CD4-positive, alpha-beta memory T cell (primary cell): ENCODE measurements at regions of chr17 and their contacts with region 1.

Region 1: DNA sequence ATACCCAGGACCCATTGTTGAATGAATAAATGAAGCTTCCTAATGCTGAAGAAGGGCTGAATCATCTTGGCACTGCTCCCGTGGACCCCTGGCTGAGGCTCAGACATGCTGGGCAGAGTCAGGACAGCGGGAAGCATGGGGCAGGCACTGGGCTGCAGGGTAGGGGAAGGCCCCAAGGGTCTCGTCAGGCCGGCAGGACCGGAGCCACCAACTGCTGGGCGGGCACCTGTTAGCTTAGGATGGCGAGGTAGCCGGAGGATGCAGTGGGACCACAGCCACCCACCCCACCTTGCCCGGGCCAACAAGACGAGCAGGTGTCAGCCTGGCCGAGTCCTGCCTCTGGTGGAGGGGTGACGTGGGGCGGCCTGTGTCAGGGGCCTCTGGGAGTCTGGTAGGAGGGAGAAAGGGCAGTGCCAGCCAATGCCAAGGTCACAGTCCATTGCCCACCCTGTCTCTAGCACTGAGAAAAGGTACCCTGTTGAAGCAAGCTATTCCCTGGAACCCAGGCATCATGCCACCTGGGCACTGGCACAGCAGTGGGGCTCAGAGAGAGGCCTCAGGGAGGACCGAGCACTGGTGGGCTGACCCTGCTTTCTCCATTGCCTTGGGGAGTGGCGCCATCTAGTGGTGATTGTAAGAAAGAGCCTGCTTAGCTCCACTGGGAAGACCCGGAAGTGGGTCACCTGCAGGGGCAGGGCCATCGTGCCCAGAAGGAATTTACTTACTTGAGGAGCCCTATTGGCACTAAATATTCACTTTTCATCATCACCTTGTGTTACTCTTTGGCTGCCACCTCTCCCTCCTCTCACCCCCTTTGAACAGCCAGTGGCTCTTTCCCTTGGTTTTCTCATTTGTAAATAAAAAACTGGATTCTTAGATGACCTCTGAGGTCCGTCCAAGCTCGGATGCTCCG is 3.0 kb upstream of the DLX3 start:
- DNase-seq: peak; percentile 80 to 83 (median 82)
- H3K4me3 ChIP-seq: no peak overlapping the region
- H3K4me3 Mint-ChIP-seq: peak overlapping the region in 1 of 8 donors; percentile 43
- H3K27ac ChIP-seq: no peak overlapping the region
- H3K27ac Mint-ChIP-seq: peak overlapping the region in 1 of 7 donors; percentile 55
- H3K4me1 ChIP-seq: peaks cover 35% of the 10 kb centered on the region
- H3K4me1 Mint-ChIP-seq: peaks cover 19 to 43% (median 25%) of the 10 kb centered on the region in 4 donors
- H3K27me3 ChIP-seq: peaks cover 61% of the 10 kb centered on the region
- H3K27me3 Mint-ChIP-seq: peaks cover 62 to 64% of the 10 kb centered on the region in 2 donors

Region 2: DNA sequence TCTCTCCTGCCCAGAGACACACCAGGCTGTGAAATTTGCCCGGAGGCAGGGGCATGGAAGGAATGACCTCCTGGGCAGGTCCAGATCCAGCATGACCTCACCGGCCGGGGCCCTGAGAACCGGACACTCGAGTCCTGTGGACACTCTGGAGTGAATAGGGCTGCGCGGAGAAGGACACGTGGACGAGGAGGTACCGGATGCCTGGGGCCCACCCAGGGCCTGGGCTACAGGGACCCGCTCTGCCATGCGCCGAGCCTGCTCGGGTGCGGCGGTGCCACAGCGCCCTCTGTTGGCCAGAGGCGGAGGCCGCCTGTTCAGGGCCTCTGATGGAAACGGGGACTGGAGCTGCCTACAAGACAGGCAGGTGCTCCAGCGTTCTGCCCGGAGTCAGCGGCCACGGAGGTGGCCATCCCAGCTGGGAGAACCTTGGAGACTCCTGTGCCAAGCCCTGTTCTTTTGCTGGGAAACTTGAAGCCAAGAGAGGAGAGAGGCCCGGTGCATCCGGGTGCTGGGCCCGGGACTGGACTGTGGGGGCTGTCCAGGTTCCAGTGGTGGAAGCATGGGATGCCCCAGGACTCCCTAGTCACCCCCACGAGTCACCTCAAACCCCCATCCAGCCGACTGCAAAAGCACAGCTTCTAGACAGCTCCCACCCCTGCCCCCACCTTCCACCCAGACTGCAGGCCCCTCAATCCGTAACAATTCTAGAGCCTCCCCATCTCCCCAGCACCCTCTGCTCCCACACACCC is 441.6 kb before region 1 on chr17:
- CTCF ChIA-PET with region 1: interaction called, 20 read pairs
- POLR2A ChIA-PET with region 1: no interaction called
- intact Hi-C with region 1: no loop called
- DNase-seq: peak; percentile 69 to 80 (median 74)
- H3K4me3 ChIP-seq: no peak overlapping the region
- H3K4me3 Mint-ChIP-seq: peak overlapping the region in 1 of 8 donors; percentile 55
- H3K27ac ChIP-seq: no peak overlapping the region
- H3K27ac Mint-ChIP-seq: no peak overlapping the region
- H3K4me1 ChIP-seq: peaks cover 6% of the 10 kb centered on the region
- H3K4me1 Mint-ChIP-seq: peaks cover 5 to 7% (median 5%) of the 10 kb centered on the region in 4 donors
- H3K27me3 ChIP-seq: no peaks in the 10 kb centered on the region
- H3K27me3 Mint-ChIP-seq: peaks cover 1 to 3% of the 10 kb centered on the region in 2 donors

Region 3: DNA sequence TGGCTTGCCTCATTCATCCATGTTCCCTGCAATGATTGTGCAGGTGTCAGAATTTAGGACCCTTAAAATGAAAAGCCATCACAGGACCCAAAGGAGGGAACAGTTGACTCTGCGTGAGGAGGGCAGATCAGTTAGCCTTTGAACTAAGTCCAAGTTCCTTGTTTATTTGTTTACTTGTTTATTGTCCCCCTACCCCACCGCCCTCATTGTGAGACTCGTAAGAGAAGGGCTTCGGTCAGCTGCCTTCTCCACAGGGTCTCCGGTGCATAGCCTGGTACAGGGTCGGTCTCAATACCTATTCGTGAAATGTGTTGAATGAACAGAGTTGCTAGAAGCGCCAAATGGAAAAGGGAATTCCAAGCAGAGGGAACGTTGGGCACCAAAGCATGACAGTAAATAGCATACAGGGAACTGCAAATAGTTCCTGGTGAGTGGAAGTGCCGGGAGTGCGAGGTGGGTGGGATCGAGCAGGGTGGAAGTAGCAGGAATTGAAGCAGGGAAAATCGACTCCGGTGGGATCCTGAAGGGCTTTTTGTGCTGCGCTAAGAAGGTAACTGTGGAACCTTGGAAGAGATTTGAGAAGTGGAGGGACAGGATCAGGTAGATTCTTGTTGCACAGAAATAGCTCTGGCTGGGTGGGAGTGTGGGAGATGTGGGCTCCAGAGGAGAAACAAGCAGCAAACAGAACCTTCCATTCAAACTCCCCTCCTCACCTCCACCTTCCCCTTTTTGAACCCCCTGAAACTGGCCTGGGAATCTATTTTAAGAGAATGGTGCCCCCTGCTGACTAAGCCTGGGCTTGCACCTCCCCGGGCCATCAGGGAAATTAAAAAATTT is 303.0 kb before region 1 on chr17:
- CTCF ChIA-PET with region 1: no interaction called
- POLR2A ChIA-PET with region 1: no interaction called
- intact Hi-C with region 1: loop called (anchors 5 kb)
- DNase-seq: peak; percentile 52 to 70 (median 61)
- H3K4me3 ChIP-seq: no peak overlapping the region
- H3K4me3 Mint-ChIP-seq: peak overlapping the region in 3 of 8 donors; percentile 1 to 41 (median 4)
- H3K27ac ChIP-seq: no peak overlapping the region
- H3K27ac Mint-ChIP-seq: peak overlapping the region; percentile 65 to 90 (median 83)
- H3K4me1 ChIP-seq: peaks cover 19% of the 10 kb centered on the region
- H3K4me1 Mint-ChIP-seq: peaks cover 22 to 51% (median 30%) of the 10 kb centered on the region in 4 donors
- H3K27me3 ChIP-seq: no peaks in the 10 kb centered on the region
- H3K27me3 Mint-ChIP-seq: no peaks in the 10 kb centered on the region

Region 4: GRCh38 chr17:49880291-49881053 is 117.6 kb before region 1 on chr17:
- CTCF ChIA-PET with region 1: interaction called, 95 read pairs
- POLR2A ChIA-PET with region 1: interaction called, 11 read pairs
- intact Hi-C with region 1: loop called (anchors 1 kb)
- DNase-seq: peak; percentile 56 to 70 (median 64)
- H3K4me3 ChIP-seq: no peak overlapping the region
- H3K4me3 Mint-ChIP-seq: peak overlapping the region in 4 of 8 donors; percentile 22 to 52 (median 42)
- H3K27ac ChIP-seq: no peak overlapping the region
- H3K27ac Mint-ChIP-seq: no peak overlapping the region
- H3K4me1 ChIP-seq: peaks cover 10% of the 10 kb centered on the region
- H3K4me1 Mint-ChIP-seq: peaks cover 0 to 7% (median 1%) of the 10 kb centered on the region in 4 donors
- H3K27me3 ChIP-seq: peaks cover 18% of the 10 kb centered on the region
- H3K27me3 Mint-ChIP-seq: peaks cover 25 to 40% of the 10 kb centered on the region in 2 donors

Region 5: DNA sequence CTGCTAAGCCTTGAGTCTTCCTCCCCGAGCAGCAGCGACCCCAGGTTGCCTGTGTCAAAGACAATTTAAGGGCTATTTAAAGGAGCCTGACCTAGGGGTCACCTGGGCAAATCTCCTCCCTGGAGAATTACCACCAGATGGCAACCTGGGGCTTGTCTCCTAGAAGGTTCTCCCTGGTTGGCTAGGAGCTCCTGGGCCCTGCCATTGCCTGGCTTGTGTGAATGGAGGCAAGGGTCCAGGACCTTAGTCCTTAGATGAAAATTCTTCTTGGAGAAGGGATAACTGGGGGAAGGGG is 98.9 kb before region 1 on chr17:
- CTCF ChIA-PET with region 1: interaction called, 21 read pairs
- POLR2A ChIA-PET with region 1: interaction called, 3 read pairs
- intact Hi-C with region 1: no loop called
- DNase-seq: no peak
- H3K4me3 ChIP-seq: no peak overlapping the region
- H3K4me3 Mint-ChIP-seq: no peak overlapping the region
- H3K27ac ChIP-seq: no peak overlapping the region
- H3K27ac Mint-ChIP-seq: no peak overlapping the region
- H3K4me1 ChIP-seq: no peaks in the 10 kb centered on the region
- H3K4me1 Mint-ChIP-seq: no peaks in the 10 kb centered on the region
- H3K27me3 ChIP-seq: peaks cover 23% of the 10 kb centered on the region
- H3K27me3 Mint-ChIP-seq: peaks cover 38 to 61% of the 10 kb centered on the region in 2 donors

Region 6: DNA sequence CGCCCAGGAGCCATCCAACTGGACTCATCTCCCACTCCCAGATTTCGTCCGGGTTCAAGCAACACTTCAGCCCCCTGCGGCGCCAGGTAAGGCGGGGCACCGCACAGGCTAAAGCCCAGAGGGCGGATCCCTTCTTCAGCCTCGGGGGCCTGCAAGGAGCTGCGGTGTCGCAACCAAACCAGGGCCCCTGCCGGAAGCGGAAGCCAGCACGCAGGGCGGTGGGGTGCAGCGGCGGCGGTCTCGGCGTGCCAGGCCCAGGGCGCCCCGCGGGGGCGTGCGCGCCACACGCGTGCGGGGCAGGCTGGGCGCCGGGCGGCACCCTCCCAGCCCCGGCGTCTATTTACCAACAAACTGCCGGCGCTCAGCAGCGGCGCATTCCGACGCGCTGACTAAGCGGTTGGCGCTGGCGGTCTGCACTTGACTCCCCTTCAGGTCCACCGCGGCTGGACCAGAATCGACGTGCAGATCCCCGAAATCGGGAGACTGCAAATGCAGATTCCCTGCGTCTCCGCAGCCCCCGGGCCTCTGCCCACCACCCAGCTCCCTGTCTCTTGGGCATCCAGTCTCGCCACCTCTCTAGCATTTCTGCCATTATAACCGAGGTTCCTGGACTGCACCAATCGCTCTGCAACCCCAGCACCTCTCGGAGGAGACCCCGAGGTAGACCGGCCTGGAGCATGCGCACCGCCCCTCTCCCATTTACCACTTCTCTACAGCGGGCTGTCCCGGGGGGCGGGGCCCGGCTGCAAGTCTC is 29.5 kb before region 1 on chr17:
- CTCF ChIA-PET with region 1: interaction called, 16 read pairs
- POLR2A ChIA-PET with region 1: interaction called, 6 read pairs
- intact Hi-C with region 1: no loop called
- DNase-seq: peak; percentile 68 to 72 (median 69)
- H3K4me3 ChIP-seq: peak overlapping the region; percentile 22 to 67
- H3K4me3 Mint-ChIP-seq: peak overlapping the region; percentile 86 to 95 (median 90)
- H3K27ac ChIP-seq: no peak overlapping the region
- H3K27ac Mint-ChIP-seq: peak overlapping the region in 5 of 7 donors; percentile 55 to 75 (median 72)
- H3K4me1 ChIP-seq: peaks cover 59% of the 10 kb centered on the region
- H3K4me1 Mint-ChIP-seq: peaks cover 28 to 70% (median 49%) of the 10 kb centered on the region in 4 donors
- H3K27me3 ChIP-seq: peaks cover 72% of the 10 kb centered on the region
- H3K27me3 Mint-ChIP-seq: peaks cover 62 to 70% of the 10 kb centered on the region in 2 donors

Region 7: DNA sequence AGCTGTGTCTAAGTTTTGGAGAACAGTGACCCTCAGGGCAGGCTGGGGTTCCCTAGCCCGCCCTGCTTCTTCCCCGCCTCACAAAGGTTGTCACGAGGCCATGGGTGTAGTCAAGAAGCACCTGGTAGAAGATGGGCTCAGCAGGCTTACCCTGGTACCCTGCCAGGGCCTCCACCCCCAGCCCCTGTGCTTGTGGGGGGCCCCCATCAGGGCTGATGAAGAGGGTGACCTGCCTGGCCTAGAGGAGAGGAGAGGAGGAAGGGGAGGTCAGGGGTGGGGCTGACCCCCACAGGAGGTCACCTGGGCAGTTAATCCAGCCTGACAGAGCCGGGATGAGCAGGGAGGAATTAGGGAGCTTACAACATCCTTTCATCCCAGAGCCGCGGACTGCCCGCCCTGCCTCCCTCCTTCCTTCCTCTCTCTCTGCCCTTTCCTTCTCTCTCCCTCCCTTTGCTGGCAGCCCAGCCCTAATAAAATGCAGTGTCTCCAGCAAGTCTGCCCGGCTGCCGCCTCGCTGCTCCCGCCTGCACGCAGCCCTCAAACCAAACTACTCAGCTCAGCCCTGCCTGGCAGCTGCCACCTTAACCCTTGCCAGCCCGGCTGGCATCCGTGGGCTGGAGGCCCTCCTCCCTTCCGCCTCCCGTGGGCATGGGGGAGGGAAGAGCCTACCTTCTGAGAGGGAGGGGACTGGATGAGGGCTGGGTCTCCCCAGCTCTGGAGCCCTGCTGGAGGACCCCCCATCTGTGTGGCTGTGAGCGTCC is 10.2 kb before region 1 on chr17:
- CTCF ChIA-PET with region 1: interaction called, 42 read pairs
- POLR2A ChIA-PET with region 1: no interaction called
- intact Hi-C with region 1: no loop called
- DNase-seq: no peak
- H3K4me3 ChIP-seq: no peak overlapping the region
- H3K4me3 Mint-ChIP-seq: no peak overlapping the region
- H3K27ac ChIP-seq: no peak overlapping the region
- H3K27ac Mint-ChIP-seq: no peak overlapping the region
- H3K4me1 ChIP-seq: peaks cover under 1% of the 10 kb centered on the region
- H3K4me1 Mint-ChIP-seq: peaks cover 3 to 5% (median 3%) of the 10 kb centered on the region in 4 donors
- H3K27me3 ChIP-seq: peaks cover 8% of the 10 kb centered on the region
- H3K27me3 Mint-ChIP-seq: peaks cover 32 to 57% of the 10 kb centered on the region in 2 donors